ENCODE measurements at regions of chr16 and their contacts with region 1.

Region 1: GRCh38 chr16:49755313-49755620 is 100.6 kb downstream of the ZNF423 start:
- DNase-seq: no peak

Region 2: DNA sequence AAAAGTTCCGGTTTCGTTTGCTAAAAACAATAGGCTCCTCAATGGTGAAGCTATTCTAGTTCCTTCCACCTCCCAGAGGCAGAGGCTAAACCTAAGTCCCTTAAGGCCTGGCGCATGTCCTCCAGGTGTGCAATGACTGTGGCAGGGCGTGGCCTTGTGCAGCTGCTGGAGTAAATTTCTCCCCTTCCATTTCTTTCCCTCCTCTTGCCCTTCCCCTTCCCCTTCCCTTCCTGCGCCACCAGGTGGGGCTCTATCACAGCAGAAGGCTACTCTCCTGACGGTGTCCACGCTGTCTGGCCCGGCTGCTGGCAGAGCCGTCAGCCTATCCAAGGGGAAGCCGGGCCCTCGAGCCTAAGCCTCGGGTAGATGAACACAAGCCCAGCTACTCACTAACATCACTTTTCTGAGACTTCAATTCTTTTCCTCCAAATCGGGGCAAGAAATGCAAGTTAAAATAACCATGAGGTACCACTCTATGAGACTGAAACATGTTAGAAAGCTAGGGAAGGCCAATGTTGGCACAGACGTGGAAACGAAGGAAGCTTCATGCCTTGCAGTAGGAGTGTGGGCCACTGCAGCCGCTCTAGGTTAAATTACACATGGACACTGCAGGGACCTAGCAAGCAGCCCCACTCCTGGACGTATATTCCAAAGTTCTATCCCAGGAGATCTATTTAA is 347.3 kb before region 1 on chr16:
- intact Hi-C with region 1: loop called (anchors 5 kb)
- DNase-seq: peak; percentile 89

Region 3: GRCh38 chr16:49491771-49492761 is 263.2 kb before region 1 on chr16:
- intact Hi-C with region 1: loop called (anchors 10 kb)
- DNase-seq: peak; percentile 77

Region 4: DNA sequence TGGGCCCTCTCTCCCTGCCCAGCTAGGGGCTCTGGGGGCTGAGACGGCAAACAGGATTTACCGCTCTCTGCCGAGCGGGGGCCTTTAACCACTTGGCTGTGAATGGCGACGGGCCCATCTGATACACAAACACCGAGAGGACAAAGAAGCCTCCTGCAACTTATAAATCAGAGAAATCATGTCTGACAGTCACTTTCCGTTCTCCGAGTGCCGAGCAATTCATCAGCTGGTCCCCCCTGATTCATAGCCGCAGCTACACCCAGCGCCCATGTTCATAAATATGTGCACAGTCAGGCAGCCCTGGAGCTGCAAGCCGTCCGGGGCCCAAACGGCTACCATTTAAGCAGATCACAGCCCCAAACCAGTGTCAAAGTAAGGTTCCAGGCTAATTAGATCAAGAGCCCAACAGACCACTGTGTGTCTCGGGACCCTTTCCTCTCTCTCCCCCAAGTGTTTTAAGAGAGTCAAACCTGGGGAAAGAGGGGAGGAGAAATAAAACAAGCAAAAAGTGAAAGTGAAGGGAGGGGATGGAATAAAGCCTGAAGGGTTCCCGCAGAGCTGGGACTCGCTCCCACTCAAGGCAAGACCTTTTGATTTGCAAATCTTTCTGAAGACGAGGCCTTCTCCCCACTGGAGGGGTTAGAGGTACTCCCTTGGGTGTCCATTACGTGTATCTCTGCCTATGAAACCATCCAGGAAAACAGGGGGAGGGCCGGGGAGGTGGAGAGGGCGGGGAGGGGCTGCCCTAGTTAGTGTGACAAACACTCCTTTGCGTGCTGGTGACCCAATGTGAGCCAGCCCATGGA is 227.0 kb before region 1 on chr16:
- intact Hi-C with region 1: no loop called
- DNase-seq: no peak

Region 5: GRCh38 chr16:49592546-49593423 is 162.5 kb before region 1 on chr16:
- intact Hi-C with region 1: loop called (anchors 5 kb)
- DNase-seq: peak; percentile 35

Region 6: GRCh38 chr16:49827805-49828438 is 72.7 kb after region 1 on chr16:
- intact Hi-C with region 1: loop called (anchors 5 kb)
- DNase-seq: no peak

Region 7: DNA sequence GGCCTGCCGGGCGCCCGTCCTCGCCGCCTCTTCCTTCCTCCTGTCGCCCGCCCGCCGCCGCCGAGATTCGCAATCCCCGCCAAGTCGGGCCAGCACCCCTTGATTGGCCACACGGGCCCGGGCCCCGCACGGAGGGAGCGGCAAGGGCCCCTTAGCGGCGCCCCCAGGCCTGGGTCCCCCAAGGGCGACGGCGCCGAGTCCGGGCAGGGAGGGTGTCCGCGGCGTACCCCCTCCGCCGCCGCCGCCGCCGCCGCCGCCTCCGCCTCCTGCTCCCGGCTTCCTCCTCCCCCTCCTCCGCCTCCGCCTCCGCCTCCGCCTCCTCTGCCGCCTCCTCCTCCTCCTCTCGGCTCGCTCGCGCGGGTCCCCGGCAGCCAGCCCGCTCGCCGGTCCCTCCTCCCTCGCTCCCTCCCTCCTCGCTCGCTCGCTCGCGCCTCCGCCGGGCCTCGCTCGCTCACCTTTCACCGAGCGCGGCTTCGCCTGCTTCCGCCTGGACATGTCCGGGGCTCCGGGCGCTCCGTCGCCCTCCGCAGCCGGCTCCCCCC is 100.1 kb after region 1 on chr16:
- intact Hi-C with region 1: loop called (anchors 2 kb)
- DNase-seq: peak; percentile 89